Activated naive CD4-positive, alpha-beta T cell treated with anti-CD3 and anti-CD28 coated beads, Interleukin-2, amount 10 ng/mL, durations not matched to agents 7 days and 5 days (primary cell): ENCODE measurements at regions of chr16 and their contacts with region 1.

Region 1: GRCh38 chr16:84186685-84187437 is at the start of gene TAF1C:
- DNase-seq: peak; percentile 91
- H3K4me3 Mint-ChIP-seq: peak within 1 kb of the TSS; percentile 88
- H3K27ac Mint-ChIP-seq: peak within 1 kb of the TSS; percentile 85
- H3K4me1 Mint-ChIP-seq: peaks cover 25% of the 10 kb centered on the region
- H3K27me3 Mint-ChIP-seq: no peaks in the 10 kb centered on the region

Region 2: DNA sequence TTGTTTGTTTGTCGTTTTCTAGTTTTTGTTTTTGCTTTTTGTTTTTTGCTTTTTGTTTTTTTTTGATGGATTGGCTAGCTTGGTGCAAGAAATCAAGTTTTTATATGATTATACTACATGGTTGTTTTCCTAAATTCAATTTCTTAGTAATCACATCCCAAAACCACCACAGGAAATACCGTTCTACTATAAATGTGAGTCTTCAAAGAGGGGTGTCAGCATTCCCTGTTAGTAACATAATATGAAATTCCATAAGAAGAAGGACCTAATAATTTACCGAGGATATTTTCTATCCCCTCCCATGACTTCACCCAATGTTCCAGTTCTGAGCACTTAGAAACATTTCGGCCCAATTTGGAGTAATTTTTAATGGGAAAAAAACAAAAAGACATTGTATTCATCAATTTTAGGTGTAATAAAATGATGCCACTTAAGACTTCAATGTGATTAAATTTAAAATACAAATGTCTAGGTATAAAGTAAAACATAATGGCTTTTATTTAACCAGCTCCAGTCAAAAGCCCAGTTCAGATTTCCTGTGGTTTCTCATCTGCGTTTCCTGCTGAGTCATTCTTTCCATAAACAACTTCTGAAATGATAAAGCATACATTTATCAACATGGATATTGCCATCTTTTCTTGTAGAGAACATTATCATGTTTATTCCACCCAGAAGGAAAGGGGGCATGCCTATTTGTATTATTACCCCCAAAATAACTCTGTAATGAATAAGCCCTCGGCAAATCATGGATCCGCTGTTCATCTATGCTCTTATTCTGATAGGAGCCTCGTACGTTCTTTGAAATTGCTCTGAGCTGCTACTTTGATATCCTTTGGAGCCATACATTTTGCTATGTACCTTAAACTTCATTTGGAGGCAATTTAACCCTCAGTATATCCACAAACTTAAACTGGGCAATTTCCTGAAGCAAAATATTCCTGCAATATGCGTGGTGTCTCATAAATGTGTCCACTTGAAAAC is 351.0 kb before region 1 on chr16:
- CTCF ChIA-PET with region 1: no interaction called
- DNase-seq: no peak
- H3K4me3 Mint-ChIP-seq: no peak overlapping the region
- H3K27ac Mint-ChIP-seq: no peak overlapping the region
- H3K4me1 Mint-ChIP-seq: peaks cover 20% of the 10 kb centered on the region
- H3K27me3 Mint-ChIP-seq: peaks cover 46% of the 10 kb centered on the region

Region 3: DNA sequence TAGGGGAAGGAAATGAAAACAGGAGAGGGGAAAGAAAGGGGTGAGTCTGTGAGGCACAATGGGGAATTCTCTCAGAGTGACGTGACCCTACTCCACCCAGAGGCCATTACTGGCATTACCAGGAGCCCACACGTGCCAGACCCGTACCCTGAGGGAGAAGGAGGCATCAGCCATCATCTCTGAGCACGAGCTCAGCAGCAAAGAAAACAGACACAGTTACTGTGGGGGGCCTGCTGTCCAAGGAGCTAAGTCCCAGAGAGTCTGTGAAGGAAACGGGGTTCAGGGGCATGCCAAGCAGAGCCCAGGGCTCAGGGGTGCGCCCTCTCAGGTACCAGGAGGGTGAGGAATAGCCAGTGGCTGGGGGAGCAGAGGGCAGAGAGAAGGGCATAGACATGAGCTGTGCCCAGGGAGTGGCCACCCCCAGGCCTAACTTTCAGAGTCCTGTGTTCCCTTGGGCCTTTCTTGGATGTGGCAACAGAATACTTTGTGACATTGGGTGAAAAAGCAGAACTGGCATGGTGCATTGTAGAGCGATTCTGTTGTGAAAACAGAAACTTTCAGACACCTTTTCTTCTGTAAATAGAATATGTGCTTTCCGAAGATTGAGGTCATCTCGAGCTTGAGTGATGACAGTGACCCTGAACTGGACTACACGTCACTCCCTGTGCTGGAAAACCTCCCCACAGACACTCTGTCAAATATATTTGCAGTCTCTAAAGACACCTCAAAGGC is 11.3 kb before region 1 on chr16:
- CTCF ChIA-PET with region 1: interaction called, 40 read pairs
- DNase-seq: peak; percentile 77
- H3K4me3 Mint-ChIP-seq: no peak overlapping the region
- H3K27ac Mint-ChIP-seq: no peak overlapping the region
- H3K4me1 Mint-ChIP-seq: no peaks in the 10 kb centered on the region
- H3K27me3 Mint-ChIP-seq: peaks cover 12% of the 10 kb centered on the region

Region 4: GRCh38 chr16:85202631-85203461 is 1016.0 kb after region 1 on chr16:
- CTCF ChIA-PET with region 1: no interaction called
- DNase-seq: no peak
- H3K4me3 Mint-ChIP-seq: no peak overlapping the region
- H3K27ac Mint-ChIP-seq: no peak overlapping the region
- H3K4me1 Mint-ChIP-seq: no peaks in the 10 kb centered on the region
- H3K27me3 Mint-ChIP-seq: peaks cover 4% of the 10 kb centered on the region